Gastrocnemius medialis (tissue), 4 donors: ENCODE measurements at regions of chr17 and their contacts with region 1.

Region 1: GRCh38 chr17:49496183-49496866 is 1.2 kb downstream of the NGFR start:
- DNase-seq: peak; percentile 29 to 48
- ATAC-seq: peak; percentile 70 to 83
- H3K4me3 ChIP-seq: peak overlapping the region; percentile 49 to 67 (median 57)
- H3K27ac ChIP-seq: no peak overlapping the region
- H3K4me1 ChIP-seq: peaks cover 19 to 26% of the 10 kb centered on the region in 2 donors
- H3K27me3 ChIP-seq: peaks cover 34 to 47% (median 38%) of the 10 kb centered on the region in 3 donors
- CTCF ChIP-seq: peak; percentile 75 to 97 (median 92)
- POLR2A ChIP-seq: no peak

Region 2: DNA sequence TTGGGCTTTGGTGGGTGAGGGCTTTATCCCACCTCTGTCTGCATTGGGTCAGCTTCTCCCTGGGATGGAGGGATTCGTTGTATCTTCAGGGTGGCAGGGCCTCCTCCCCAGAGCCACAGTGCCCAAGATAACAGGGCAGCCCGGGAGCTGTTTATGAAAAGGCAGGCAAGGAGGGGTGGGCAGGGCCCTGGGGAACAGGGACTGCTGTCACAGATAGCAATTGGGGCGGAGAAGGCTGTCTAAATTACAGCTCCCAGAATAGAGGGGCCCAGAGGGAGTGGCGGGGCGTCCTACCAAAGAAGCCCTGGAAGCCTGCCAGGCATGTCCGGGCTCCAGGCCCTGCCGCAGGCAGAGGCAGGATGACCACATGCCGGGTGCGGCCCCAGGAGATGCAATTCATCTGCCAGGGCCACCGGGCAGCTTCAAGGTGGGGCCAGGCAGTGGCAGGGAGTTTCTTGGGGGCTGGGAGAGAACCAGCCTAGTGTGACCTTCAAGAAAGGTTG is 247.0 kb before region 1 on chr17:
- in situ Hi-C with region 1: no loop called
- intact Hi-C with region 1: no loop called
- DNase-seq: peak; percentile 10 to 43
- ATAC-seq: peak in 1 of 2 donors; percentile 53
- H3K4me3 ChIP-seq: no peak overlapping the region
- H3K27ac ChIP-seq: no peak overlapping the region
- H3K4me1 ChIP-seq: peaks cover 7 to 10% of the 10 kb centered on the region in 2 donors
- H3K27me3 ChIP-seq: no peaks in the 10 kb centered on the region
- CTCF ChIP-seq: no peak
- POLR2A ChIP-seq: no peak

Region 3: GRCh38 chr17:49456183-49456965 is 40.0 kb before region 1 on chr17:
- in situ Hi-C with region 1: no loop called
- intact Hi-C with region 1: no loop called
- DNase-seq: no peak
- ATAC-seq: no peak
- H3K4me3 ChIP-seq: no peak overlapping the region
- H3K27ac ChIP-seq: no peak overlapping the region
- H3K4me1 ChIP-seq: no peaks in the 10 kb centered on the region
- H3K27me3 ChIP-seq: no peaks in the 10 kb centered on the region
- CTCF ChIP-seq: no peak
- POLR2A ChIP-seq: no peak

Region 4: GRCh38 chr17:49515196-49515770 is 19.0 kb after region 1 on chr17:
- in situ Hi-C with region 1: no loop called
- intact Hi-C with region 1: loop called (anchors 1 kb)
- DNase-seq: peak; percentile 69 to 92
- ATAC-seq: peak; percentile 87 to 91
- H3K4me3 ChIP-seq: peak overlapping the region in 1 of 4 donors; percentile 5
- H3K27ac ChIP-seq: peak overlapping the region; percentile 73 to 86 (median 82)
- H3K4me1 ChIP-seq: peaks cover 18 to 19% of the 10 kb centered on the region in 2 donors
- H3K27me3 ChIP-seq: no peaks in the 10 kb centered on the region
- CTCF ChIP-seq: peak in 1 of 5 experiments; percentile 24
- POLR2A ChIP-seq: no peak

Region 5: DNA sequence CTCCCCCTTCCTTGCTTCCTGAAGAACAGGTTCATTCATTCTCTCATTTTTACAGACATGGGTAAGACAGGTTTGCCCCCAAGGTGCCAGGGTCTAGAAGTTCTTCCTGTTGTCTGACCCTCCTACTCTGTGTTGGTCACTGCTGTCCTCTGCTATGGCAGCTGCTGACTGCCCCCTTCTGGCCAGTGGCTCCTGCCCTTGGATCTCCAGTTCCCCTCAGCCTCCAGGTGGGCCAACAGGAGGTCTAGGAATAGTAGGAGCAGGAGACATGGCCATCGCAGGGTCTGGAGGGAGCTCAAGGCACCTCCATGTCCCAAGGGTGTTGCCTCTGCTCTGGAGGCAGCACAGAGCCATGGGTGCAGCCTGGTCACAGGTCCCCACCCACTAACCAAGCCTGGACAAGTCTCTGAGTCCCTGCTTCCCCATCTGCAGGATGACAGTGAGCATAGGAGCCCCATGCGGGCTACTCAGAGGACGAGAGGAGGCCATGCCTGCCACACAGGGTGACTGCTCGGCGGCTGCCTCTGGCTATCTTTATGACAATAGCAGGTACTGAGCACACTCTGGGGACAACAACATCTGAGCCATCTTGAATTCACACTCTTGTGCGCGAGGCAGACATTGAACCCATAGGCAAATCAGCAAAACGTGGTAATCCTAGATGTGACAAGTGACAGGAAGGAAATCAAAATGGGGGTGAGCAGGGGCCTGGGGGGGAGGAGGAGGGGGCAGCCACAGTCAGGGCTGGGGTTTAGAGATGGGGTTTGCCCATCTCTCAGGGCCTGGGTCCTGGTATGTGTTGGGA is 52.4 kb after region 1 on chr17:
- in situ Hi-C with region 1: loop called in 3 of 4 experiments (anchors 5 to 10 kb)
- intact Hi-C with region 1: loop called (anchors 1 kb)
- DNase-seq: no peak
- ATAC-seq: peak in 1 of 2 donors; percentile 51
- H3K4me3 ChIP-seq: no peak overlapping the region
- H3K27ac ChIP-seq: no peak overlapping the region
- H3K4me1 ChIP-seq: no peaks in the 10 kb centered on the region
- H3K27me3 ChIP-seq: no peaks in the 10 kb centered on the region
- CTCF ChIP-seq: peak; percentile 40 to 67 (median 56)
- POLR2A ChIP-seq: no peak

Region 6: DNA sequence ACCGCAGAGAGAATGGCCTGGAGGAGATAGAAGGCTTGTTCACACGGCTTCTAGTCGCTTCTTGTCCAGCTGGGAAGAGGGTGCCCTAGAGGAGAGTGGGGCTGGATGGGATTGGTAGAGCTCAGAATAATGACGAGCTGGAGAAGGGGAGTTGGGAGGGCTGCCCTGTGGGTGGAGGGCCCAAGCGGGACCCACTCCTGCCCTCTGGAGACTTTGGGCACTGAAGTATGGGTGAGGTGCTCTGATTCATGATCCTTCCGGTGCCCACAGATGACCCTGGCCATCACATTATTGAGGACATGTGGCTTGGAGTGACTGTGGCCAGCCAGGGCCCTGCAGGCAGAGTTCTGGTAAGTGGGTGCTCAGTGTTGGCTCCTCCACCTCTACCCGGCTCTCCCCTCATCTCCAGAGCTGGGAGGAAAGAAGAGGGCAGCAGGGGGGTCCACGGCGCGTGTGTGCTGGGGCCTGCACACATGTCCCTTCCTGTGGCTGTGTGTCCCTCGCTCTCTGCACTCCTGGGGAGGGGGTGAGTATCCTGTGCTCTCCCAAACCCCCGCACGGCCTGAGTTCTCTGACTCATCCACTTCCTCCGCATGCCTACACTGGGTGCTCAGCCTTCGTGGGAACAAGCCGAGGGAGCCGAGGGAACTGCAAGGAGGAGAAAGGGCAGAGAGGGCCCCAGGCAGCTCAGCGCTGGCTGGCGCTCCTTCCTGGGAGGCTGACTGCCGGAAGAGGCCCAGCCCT is 568.1 kb after region 1 on chr17:
- in situ Hi-C with region 1: no loop called
- intact Hi-C with region 1: no loop called
- DNase-seq: peak in 1 of 2 donors; percentile 56
- ATAC-seq: peak in 1 of 2 donors; percentile 29
- H3K4me3 ChIP-seq: no peak overlapping the region
- H3K27ac ChIP-seq: peak overlapping the region; percentile 91 to 96 (median 92)
- H3K4me1 ChIP-seq: peaks cover 85 to 90% of the 10 kb centered on the region in 2 donors
- H3K27me3 ChIP-seq: no peaks in the 10 kb centered on the region
- CTCF ChIP-seq: no peak
- POLR2A ChIP-seq: no peak